CD4-positive, alpha-beta memory T cell (primary cell): ENCODE measurements at regions of chr1 and their contacts with region 1.

Region 1: GRCh38 chr1:235253219-235253962 is 74.6 kb downstream of the ARID4B start:
- DNase-seq: peak; percentile 58 to 71 (median 66)
- H3K4me3 ChIP-seq: no peak overlapping the region
- H3K4me3 Mint-ChIP-seq: no peak overlapping the region
- H3K27ac ChIP-seq: no peak overlapping the region
- H3K27ac Mint-ChIP-seq: peak overlapping the region; percentile 35 to 86 (median 70)
- H3K4me1 ChIP-seq: peaks cover 36% of the 10 kb centered on the region
- H3K4me1 Mint-ChIP-seq: peaks cover 24 to 46% (median 30%) of the 10 kb centered on the region in 4 donors
- H3K27me3 ChIP-seq: no peaks in the 10 kb centered on the region
- H3K27me3 Mint-ChIP-seq: no peaks in the 10 kb centered on the region

Region 2: DNA sequence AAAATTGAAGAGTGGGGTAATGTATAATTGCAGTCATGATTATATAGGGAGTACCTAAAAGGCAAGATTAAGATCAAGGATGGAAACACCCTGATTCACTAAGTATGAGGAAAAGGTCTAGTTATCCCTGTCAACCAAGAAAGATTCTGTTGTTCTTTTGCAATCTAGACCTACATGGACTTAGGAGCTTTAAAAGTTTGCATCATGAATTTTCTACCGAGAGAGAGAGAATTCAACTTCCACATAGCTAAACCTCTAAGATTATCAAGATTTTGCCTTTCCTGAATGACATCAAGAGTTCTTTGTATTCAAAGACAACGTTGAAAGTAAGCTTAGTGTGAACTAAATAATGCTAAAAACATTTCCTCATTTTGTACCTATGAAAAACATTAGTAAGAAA is 13.5 kb before region 1 on chr1:
- CTCF ChIA-PET with region 1: interaction called, 12 read pairs
- POLR2A ChIA-PET with region 1: no interaction called
- intact Hi-C with region 1: no loop called
- DNase-seq: peak in 2 of 5 donors; percentile 9 to 10
- H3K4me3 ChIP-seq: no peak overlapping the region
- H3K4me3 Mint-ChIP-seq: peak overlapping the region in 2 of 8 donors; percentile 5 to 17
- H3K27ac ChIP-seq: no peak overlapping the region
- H3K27ac Mint-ChIP-seq: peak overlapping the region in 5 of 7 donors; percentile 30 to 86 (median 63)
- H3K4me1 ChIP-seq: peaks cover 30% of the 10 kb centered on the region
- H3K4me1 Mint-ChIP-seq: peaks cover 29 to 43% (median 35%) of the 10 kb centered on the region in 4 donors
- H3K27me3 ChIP-seq: no peaks in the 10 kb centered on the region
- H3K27me3 Mint-ChIP-seq: no peaks in the 10 kb centered on the region

Region 3: GRCh38 chr1:235675152-235675890 is 421.9 kb after region 1 on chr1:
- CTCF ChIA-PET with region 1: no interaction called
- POLR2A ChIA-PET with region 1: no interaction called
- intact Hi-C with region 1: no loop called
- DNase-seq: no peak
- H3K4me3 ChIP-seq: no peak overlapping the region
- H3K4me3 Mint-ChIP-seq: no peak overlapping the region
- H3K27ac ChIP-seq: no peak overlapping the region
- H3K27ac Mint-ChIP-seq: no peak overlapping the region
- H3K4me1 ChIP-seq: no peaks in the 10 kb centered on the region
- H3K4me1 Mint-ChIP-seq: no peaks in the 10 kb centered on the region
- H3K27me3 ChIP-seq: no peaks in the 10 kb centered on the region
- H3K27me3 Mint-ChIP-seq: no peaks in the 10 kb centered on the region